ENCODE measurements at regions of chr19 and their contacts with region 1.

Region 1: GRCh38 chr19:6632002-6632621 is 37.8 kb downstream of the TNFSF14 start:
- DNase-seq: peak; percentile 84
- ATAC-seq: peak; percentile 82
- H3K4me3 ChIP-seq: no peak overlapping the region
- H3K27ac ChIP-seq: peak overlapping the region; percentile 53
- H3K4me1 ChIP-seq: peaks cover 12% of the 10 kb centered on the region
- H3K27me3 ChIP-seq: no peaks in the 10 kb centered on the region
- CTCF ChIP-seq: peak; percentile 77 to 85 (median 80)
- EP300 ChIP-seq: no peak
- POLR2A ChIP-seq: no peak
- RAD21 ChIP-seq: peak; percentile 86

Region 2: GRCh38 chr19:6521718-6522646 is 110.1 kb before region 1 on chr19:
- CTCF ChIA-PET with region 1: interaction called, 29 read pairs
- POLR2A ChIA-PET with region 1: interaction called, 8 read pairs
- RAD21 ChIA-PET with region 1: interaction called, 35 read pairs
- SMC1A ChIA-PET with region 1: interaction called, 23 read pairs
- in situ Hi-C with region 1: no loop called
- intact Hi-C with region 1: no loop called
- DNase-seq: peak; percentile 95
- ATAC-seq: peak; percentile 70
- H3K4me3 ChIP-seq: peak overlapping the region; percentile 60
- H3K27ac ChIP-seq: peak overlapping the region; percentile 99
- H3K4me1 ChIP-seq: peaks cover 52% of the 10 kb centered on the region
- H3K27me3 ChIP-seq: no peaks in the 10 kb centered on the region
- CTCF ChIP-seq: no peak
- EP300 ChIP-seq: peak; percentile 85 to 86; a peak in 2 of 4 replicates
- POLR2A ChIP-seq: peak; percentile 82
- RAD21 ChIP-seq: no peak

Region 3: GRCh38 chr19:6590827-6591319 is 41.2 kb before region 1 on chr19 and contains the start of gene CD70:
- CTCF ChIA-PET with region 1: interaction called, 10 read pairs
- POLR2A ChIA-PET with region 1: interaction called, 4 read pairs
- RAD21 ChIA-PET with region 1: interaction called, 27 read pairs
- SMC1A ChIA-PET with region 1: interaction called, 19 read pairs
- in situ Hi-C with region 1: no loop called
- intact Hi-C with region 1: loop called (anchors 2 kb)
- DNase-seq: peak; percentile 88
- ATAC-seq: peak; percentile 66
- H3K4me3 ChIP-seq: peak within 1 kb of the TSS; percentile 100
- H3K27ac ChIP-seq: peak within 1 kb of the TSS; percentile 93
- H3K4me1 ChIP-seq: peaks cover 34% of the 10 kb centered on the region
- H3K27me3 ChIP-seq: no peaks in the 10 kb centered on the region
- CTCF ChIP-seq: no peak
- EP300 ChIP-seq: peak in 1 of 2 experiments; percentile 57; a peak in 1 of 4 replicates
- POLR2A ChIP-seq: peak; percentile 96
- RAD21 ChIP-seq: 0 out of 2 replicates have a peak, but pooled peaks have one; percentile 1
- polyA plus RNA-seq, gene CD70: 16.4 to 35.8 TPM

Region 4: DNA sequence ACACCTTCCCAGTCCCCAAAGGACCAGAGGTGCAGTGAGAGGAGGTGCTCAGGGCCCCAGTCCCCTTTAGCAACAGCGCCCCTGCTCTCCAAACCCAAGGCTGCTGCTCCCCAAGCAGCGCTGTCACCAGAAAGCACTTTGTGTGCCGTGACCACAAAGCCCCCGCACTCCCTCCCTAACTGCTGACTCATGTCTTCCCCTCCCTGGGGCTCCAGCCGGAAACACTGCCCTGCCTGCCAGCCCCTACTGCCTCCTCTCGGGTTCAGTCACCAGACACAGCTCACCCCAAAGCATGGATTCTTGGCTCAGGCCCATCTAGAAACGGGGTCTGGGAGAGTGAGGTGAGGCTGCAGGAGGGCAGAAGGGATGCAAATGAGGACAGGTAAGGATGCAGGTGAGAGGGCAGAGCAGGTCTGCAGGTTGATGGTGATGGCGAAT is 42.8 kb after region 1 on chr19:
- CTCF ChIA-PET with region 1: interaction called, 25 read pairs
- POLR2A ChIA-PET with region 1: interaction called, 5 read pairs
- RAD21 ChIA-PET with region 1: interaction called, 7 read pairs
- SMC1A ChIA-PET with region 1: interaction called, 20 read pairs
- in situ Hi-C with region 1: no loop called
- intact Hi-C with region 1: loop called (anchors 2 kb)
- DNase-seq: peak; percentile 87
- ATAC-seq: peak; percentile 75
- H3K4me3 ChIP-seq: peak overlapping the region; percentile 40; the same call in 1 of the 2 replicates
- H3K27ac ChIP-seq: peak overlapping the region; percentile 69
- H3K4me1 ChIP-seq: peaks cover 35% of the 10 kb centered on the region
- H3K27me3 ChIP-seq: no peaks in the 10 kb centered on the region
- CTCF ChIP-seq: peak in 2 of 3 experiments; percentile 30 to 36; a peak in 4 of 6 replicates
- EP300 ChIP-seq: peak; percentile 75 to 83
- POLR2A ChIP-seq: 0 out of 2 replicates have a peak, but pooled peaks have one; percentile 37
- RAD21 ChIP-seq: peak; percentile 23; the same call in 1 of the 2 replicates

Region 5: DNA sequence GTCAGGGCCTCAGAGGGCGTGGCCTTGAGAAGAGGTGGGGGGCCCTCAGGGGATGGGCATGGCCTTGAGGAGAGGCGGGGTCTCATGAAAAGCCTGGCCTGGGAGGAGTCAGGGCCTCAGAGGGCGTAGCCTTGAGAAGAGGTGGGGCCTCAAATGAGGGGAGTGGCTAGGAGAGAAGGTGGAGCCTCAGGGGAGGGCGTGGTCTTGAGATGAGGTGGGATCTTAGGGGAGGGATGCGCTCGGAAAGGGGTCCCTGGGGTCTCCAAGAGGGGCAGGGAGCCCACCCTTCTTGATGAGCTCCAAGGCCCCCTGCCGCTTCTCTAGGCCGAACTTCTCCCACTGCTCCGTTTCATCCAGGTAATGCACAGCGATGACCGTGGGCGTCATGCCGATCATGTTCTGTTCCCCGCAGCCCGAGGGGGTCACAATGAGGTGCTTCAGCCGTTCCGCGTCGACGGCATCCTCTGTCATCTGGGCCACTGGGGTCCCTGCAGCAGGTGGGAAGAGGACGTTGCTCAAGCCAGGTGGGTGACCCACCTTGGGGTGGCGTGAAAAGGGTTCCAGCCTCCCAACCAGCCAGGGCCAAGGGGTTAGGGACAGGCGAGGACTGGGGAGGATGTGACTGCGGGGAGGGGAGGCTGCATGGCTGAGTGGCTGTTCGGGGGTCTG is 62.2 kb after region 1 on chr19:
- CTCF ChIA-PET with region 1: no interaction called
- POLR2A ChIA-PET with region 1: no interaction called
- RAD21 ChIA-PET with region 1: no interaction called
- SMC1A ChIA-PET with region 1: no interaction called
- in situ Hi-C with region 1: no loop called
- intact Hi-C with region 1: no loop called
- DNase-seq: no peak
- ATAC-seq: peak; percentile 72
- H3K4me3 ChIP-seq: no peak overlapping the region
- H3K27ac ChIP-seq: no peak overlapping the region
- H3K4me1 ChIP-seq: no peaks in the 10 kb centered on the region
- H3K27me3 ChIP-seq: no peaks in the 10 kb centered on the region
- CTCF ChIP-seq: no peak
- EP300 ChIP-seq: no peak
- POLR2A ChIP-seq: no peak
- RAD21 ChIP-seq: no peak

Region 6: GRCh38 chr19:6767357-6768235 is 135.5 kb after region 1 on chr19 and contains the start of gene SH2D3A:
- CTCF ChIA-PET with region 1: interaction called, 17 read pairs
- POLR2A ChIA-PET with region 1: interaction called, 3 read pairs
- RAD21 ChIA-PET with region 1: interaction called, 3 read pairs
- SMC1A ChIA-PET with region 1: interaction called, 8 read pairs
- in situ Hi-C with region 1: no loop called
- intact Hi-C with region 1: no loop called
- DNase-seq: peak; percentile 92
- ATAC-seq: peak; percentile 79
- H3K4me3 ChIP-seq: peak within 1 kb of the TSS; percentile 85
- H3K27ac ChIP-seq: peak within 1 kb of the TSS; percentile 83
- H3K4me1 ChIP-seq: peaks cover 23% of the 10 kb centered on the region
- H3K27me3 ChIP-seq: no peaks in the 10 kb centered on the region
- CTCF ChIP-seq: no peak
- EP300 ChIP-seq: no peak; a peak in 1 of 4 replicates
- POLR2A ChIP-seq: peak; percentile 70; the same call in 1 of the 2 replicates
- RAD21 ChIP-seq: no peak
- polyA plus RNA-seq, gene SH2D3A: 0.77 to 1.4 TPM